ENCODE measurements at regions of chr4 and their contacts with region 1.

Region 1: DNA sequence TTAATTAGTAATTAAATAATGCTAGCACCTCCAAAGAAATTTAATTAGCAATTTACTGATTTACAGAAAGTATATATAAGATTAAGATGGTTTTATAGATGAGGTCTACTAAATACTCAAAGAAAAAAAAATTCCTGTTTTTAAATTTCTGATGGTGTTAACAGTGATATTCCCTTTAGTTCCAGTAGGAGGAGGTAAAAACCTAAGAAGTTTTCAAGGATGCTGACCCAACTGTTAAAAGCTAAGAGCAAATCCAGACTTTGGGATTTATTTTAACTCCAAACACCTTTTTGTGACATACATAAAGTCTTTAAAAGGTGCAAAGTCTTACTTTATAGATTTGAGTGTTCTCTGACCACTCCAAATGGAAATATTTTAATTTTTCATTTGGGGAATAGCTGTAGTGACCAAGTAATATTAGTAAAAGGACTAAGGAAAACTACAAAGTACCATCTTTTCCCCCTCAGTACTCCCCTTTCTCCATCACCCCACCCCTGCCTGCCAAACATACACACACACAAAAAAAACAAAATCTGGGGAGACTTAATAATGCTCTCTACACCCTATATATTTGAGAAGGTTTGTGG is 34.2 kb upstream of the CSN1S1 start:
- DNase-seq: no peak
- ATAC-seq: no peak
- H3K4me3 Mint-ChIP-seq: no peak overlapping the region
- H3K27ac Mint-ChIP-seq: no peak overlapping the region
- H3K4me1 Mint-ChIP-seq: no peaks in the 10 kb centered on the region
- H3K27me3 Mint-ChIP-seq: no peaks in the 10 kb centered on the region
- CTCF ChIP-seq: no peak

Region 2: GRCh38 chr4:70505151-70505748 is 608.6 kb after region 1 on chr4:
- CTCF ChIA-PET with region 1: no interaction called
- POLR2A ChIA-PET with region 1: no interaction called
- intact Hi-C with region 1: loop called (anchors 10 kb)
- DNase-seq: peak; percentile 21
- ATAC-seq: peak; percentile 50
- H3K4me3 Mint-ChIP-seq: no peak overlapping the region
- H3K27ac Mint-ChIP-seq: no peak overlapping the region
- H3K4me1 Mint-ChIP-seq: no peaks in the 10 kb centered on the region
- H3K27me3 Mint-ChIP-seq: peaks cover under 1% of the 10 kb centered on the region
- CTCF ChIP-seq: no peak